IMR-90 (cell line): ENCODE measurements at regions of chr7 and their contacts with region 1.

Region 1: DNA sequence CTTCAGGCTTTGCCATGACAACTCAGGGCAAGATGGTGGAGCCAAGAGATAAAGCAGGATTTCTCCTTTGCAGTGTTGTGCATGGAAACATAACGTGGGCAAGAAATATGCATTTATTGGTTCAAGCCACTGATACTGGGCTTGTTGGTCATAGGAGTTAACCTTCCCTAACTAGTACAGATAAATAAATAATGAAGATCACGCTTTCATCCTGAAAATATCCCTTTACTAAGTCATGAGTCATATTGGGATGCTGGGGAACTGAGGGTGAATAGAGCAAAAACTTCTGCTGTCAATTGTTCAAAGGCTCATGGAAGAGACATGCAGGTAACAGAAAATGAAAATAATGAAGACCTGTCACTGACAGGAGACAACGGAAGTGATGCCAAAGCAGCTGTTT is 55.5 kb downstream of the TES start:
- DNase-seq: peak; percentile 63
- ATAC-seq: peak; percentile 42
- H3K4me3 ChIP-seq: no peak overlapping the region
- H3K27ac ChIP-seq: peak overlapping the region; percentile 48; the same call in 1 of the 2 replicates
- H3K4me1 ChIP-seq: peaks cover 21% of the 10 kb centered on the region
- H3K27me3 ChIP-seq: no peaks in the 10 kb centered on the region
- CTCF ChIP-seq: no peak
- POLR2A ChIP-seq: no peak
- RAD21 ChIP-seq: no peak

Region 2: DNA sequence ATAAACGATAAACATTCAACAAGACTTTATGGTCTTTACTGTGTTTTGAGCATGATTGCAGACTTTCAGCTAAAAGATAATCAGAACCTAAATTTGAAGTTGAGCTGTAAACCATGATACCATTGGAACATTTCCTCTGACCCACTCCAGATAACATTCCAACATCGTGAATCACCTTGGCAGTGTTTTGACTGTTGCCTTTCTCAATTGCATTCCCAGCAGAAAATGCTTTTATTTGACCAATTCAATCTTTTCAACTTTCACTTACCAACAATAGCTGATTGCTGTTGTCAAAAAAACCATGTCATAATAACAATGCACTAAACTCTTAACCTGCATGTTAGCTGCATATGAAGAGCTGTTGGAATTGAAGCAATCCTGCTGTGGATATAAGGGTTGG is 1178.4 kb before region 1 on chr7:
- CTCF ChIA-PET with region 1: no interaction called
- POLR2A ChIA-PET with region 1: no interaction called
- dilution Hi-C with region 1: no loop called
- in situ Hi-C with region 1: no loop called
- intact Hi-C with region 1: no loop called
- DNase-seq: peak; percentile 92
- ATAC-seq: peak; percentile 85
- H3K4me3 ChIP-seq: no peak overlapping the region
- H3K27ac ChIP-seq: no peak overlapping the region
- H3K4me1 ChIP-seq: peaks cover 3% of the 10 kb centered on the region; the same call in 1 of the 2 replicates
- H3K27me3 ChIP-seq: no peaks in the 10 kb centered on the region
- CTCF ChIP-seq: no peak
- POLR2A ChIP-seq: no peak
- RAD21 ChIP-seq: no peak

Region 3: DNA sequence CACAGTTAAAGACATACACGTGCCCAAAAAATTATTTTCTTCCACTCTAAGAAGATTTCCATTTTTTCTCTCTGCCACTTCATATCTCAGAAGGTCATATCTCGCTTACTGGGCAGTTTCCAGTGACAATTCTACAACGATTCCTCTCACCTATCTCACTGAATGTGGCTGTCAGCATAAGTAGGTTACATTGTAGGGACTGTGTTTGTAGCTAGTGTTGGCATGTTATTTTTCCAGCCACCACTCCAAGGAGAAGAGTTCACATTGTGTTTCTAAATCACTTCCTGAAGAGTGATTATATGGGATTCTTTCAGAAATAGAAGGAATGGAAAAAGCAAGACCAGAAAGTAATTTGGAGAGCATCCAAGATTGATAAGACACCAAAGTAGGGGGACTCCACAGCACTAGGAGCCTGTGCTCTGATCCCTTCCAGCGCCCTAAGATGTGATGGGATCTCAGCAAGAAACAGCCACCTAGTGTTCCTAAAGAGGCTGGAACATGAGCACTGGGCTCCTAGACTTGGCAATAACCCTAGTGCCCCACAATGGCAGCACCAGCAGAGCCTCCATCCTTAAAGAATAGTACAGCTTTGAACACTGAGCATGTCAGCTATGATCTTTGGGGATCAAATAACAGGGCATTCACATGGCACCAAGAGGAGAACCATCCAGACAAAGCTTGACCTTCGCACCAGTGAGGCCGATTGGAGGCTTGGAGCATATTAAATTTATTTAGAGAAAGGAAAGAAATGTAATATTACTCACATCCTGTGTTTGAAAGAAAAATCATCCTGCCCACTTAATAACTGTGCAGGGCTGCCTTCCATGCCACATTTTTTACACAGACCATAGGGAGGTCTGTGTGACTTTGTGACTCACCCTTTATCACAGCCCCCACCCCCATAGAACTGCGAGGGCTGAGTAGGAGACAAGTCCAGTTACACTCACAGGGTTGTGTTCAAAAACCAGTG is 310.8 kb after region 1 on chr7:
- CTCF ChIA-PET with region 1: no interaction called
- POLR2A ChIA-PET with region 1: no interaction called
- dilution Hi-C with region 1: no loop called
- in situ Hi-C with region 1: loop called (anchors 5 kb)
- intact Hi-C with region 1: no loop called
- DNase-seq: peak; percentile 98
- ATAC-seq: peak; percentile 95
- H3K4me3 ChIP-seq: no peak overlapping the region
- H3K27ac ChIP-seq: peak overlapping the region; percentile 99
- H3K4me1 ChIP-seq: peaks cover 12% of the 10 kb centered on the region
- H3K27me3 ChIP-seq: no peaks in the 10 kb centered on the region
- CTCF ChIP-seq: no peak
- POLR2A ChIP-seq: no peak
- RAD21 ChIP-seq: no peak; the same call in 1 of the 2 replicates